ENCODE measurements at regions of chr5 and their contacts with region 1.

Region 1: DNA sequence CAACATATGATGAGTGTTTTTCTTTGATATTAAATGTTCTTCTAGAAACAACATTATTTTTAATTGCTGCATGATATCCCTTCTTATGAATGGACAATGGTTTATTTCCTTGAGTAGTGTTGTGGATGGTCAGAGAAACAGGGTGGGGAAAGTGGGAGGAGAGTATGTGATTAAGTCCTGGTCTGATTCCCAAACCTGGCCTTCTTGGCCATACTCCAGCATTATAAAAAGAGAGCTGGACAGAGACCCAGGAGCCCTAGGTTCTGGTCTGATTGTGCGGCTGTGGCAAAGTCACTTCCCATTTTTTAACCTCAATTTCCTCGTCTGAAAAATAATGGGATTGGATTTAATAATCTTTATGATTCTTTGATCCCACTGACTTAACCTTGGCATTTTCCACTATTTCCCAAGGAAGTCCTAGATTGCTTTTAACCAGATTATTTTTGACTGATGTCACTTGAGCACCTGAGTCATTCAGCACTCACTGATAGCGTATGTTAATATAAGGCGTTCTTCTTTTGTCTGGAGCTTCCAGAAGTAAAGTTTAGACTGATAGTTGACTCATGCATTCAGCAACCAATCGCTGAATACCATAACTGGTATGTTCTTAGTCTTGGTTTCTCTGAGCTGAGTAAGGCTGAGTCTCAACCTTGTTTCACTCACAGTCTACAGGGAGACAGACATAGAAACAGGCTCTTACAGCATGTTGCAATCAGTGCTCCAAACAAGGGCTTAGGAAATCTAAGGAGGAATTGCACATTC is 26.2 kb downstream of the OSMR start:
- DNase-seq: no peak
- H3K4me3 ChIP-seq: no peak overlapping the region
- H3K27ac ChIP-seq: peak overlapping the region; percentile 33 to 63 (median 50)
- H3K4me1 ChIP-seq: peaks cover 0 to 25% (median 21%) of the 10 kb centered on the region in 4 donors
- H3K27me3 ChIP-seq: no peaks in the 10 kb centered on the region
- CTCF ChIP-seq: no peak
- EP300 ChIP-seq: no peak
- POLR2A ChIP-seq: no peak

Region 2: GRCh38 chr5:38396766-38397165 is 475.2 kb before region 1 on chr5:
- intact Hi-C with region 1: no loop called
- DNase-seq: no peak
- H3K4me3 ChIP-seq: no peak overlapping the region
- H3K27ac ChIP-seq: no peak overlapping the region
- H3K4me1 ChIP-seq: no peaks in the 10 kb centered on the region
- H3K27me3 ChIP-seq: no peaks in the 10 kb centered on the region
- CTCF ChIP-seq: no peak
- EP300 ChIP-seq: no peak
- POLR2A ChIP-seq: no peak

Region 3: GRCh38 chr5:38831909-38832308 is 40.1 kb before region 1 on chr5:
- intact Hi-C with region 1: loop called (anchors 10 kb)
- DNase-seq: no peak
- H3K4me3 ChIP-seq: no peak overlapping the region
- H3K27ac ChIP-seq: no peak overlapping the region
- H3K4me1 ChIP-seq: peaks cover 0 to 8% (median 0%) of the 10 kb centered on the region in 4 donors
- H3K27me3 ChIP-seq: no peaks in the 10 kb centered on the region
- CTCF ChIP-seq: peak in 3 of 4 experiments; percentile 22 to 54 (median 47)
- EP300 ChIP-seq: no peak
- POLR2A ChIP-seq: no peak

Region 4: DNA sequence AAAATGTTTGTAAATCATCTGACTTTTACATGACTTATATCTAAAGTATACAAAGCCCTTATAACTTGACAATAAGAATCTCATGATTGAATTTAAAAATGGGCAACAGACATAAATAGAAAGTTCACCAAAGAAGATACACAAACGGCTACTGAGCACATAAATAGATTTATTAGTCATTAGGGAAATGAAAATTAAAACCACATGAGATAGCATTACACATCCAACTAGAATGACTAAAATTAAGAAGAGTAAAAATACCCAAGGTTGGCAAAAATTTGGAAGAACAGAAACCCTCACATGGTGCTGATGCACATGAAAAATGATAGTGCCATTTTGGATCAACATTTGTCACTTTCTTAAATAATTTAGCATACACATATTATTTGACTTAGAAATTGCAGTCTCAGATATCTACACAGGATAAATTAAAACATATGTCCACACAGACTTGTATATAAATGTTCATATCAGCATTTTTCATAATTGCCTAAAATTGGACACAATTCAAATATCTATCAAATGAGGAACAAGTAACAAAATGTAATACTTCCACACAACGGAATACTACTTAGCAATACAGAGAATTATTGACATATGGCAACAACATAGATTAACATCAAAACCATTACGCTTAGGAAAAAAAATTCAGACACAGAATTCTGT is 911.9 kb after region 1 on chr5:
- intact Hi-C with region 1: no loop called
- DNase-seq: no peak
- H3K4me3 ChIP-seq: no peak overlapping the region
- H3K27ac ChIP-seq: no peak overlapping the region
- H3K4me1 ChIP-seq: no peaks in the 10 kb centered on the region
- H3K27me3 ChIP-seq: no peaks in the 10 kb centered on the region
- CTCF ChIP-seq: no peak
- EP300 ChIP-seq: no peak
- POLR2A ChIP-seq: no peak